ENCODE measurements at regions of chr11 and their contacts with region 1.

Region 1: DNA sequence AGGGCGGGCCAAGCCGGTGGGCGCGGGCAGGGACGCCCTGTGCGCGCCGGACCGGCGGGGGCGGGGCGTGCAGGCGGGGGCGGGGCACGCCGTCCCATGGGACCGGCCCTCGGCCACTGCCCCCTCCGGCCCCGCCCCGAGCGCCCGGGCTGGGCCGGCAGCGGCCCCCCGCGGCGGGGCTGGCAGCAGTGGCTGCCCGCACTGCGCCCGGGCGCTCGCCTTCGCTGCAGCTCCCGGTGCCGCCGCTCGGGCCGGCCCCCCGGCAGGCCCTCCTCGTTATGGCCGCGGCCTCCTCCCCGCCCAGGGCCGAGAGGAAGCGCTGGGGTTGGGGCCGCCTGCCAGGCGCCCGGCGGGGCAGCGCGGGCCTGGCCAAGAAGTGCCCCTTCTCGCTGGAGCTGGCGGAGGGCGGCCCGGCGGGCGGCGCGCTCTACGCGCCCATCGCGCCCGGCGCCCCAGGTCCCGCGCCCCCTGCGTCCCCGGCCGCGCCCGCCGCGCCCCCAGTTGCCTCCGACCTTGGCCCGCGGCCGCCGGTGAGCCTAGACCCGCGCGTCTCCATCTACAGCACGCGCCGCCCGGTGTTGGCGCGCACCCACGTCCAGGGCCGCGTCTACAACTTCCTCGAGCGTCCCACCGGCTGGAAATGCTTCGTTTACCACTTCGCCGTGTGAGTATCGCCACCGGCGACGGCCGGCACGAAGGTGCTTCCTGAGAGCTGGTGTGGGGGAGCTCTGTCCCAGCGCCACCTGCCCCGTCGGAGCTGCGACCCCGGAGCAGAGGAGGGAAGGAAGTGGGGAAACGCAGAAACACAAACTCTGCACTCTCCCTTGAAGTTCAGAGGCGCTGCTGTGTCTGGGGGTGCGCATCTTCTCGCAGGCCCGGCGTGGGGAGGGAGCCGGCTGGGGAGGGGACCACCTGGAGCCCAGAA is at the start of gene KCNQ1:
- DNase-seq: peak in 6 of 7 donors; percentile 69 to 90 (median 79)
- H3K4me3 ChIP-seq: peak within 1 kb of the TSS; percentile 34 to 88 (median 76)
- H3K27ac ChIP-seq: peak within 1 kb of the TSS; percentile 34 to 91 (median 73)
- H3K4me1 ChIP-seq: peaks cover 41 to 42% of the 10 kb centered on the region in 2 donors
- H3K27me3 ChIP-seq: no peaks in the 10 kb centered on the region
- CTCF ChIP-seq: peak in 2 of 6 experiments; percentile 27 to 29
- POLR2A ChIP-seq: peak; percentile 88 to 93
- total RNA-seq, gene KCNQ1: 11.0 to 447 (median 353) TPM

Region 2: DNA sequence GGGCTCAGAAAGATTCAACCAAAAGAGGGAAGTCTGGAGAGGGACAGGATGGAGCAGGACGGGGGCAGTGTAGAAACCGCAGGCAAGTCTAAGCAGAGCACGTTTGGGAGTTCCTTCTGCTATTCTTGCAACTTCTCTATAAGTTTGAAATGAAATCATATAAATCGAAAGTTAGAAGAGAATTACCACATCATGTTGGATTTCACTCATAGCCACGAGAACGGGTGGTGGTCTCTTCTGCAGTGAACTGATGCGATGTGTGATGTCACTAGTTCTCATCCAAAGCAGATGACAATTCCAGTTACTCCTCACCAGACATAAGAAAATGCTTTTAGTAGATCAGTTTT is 35.8 kb after region 1 on chr11:
- intact Hi-C with region 1: loop called in 1 of 2 experiments (anchors 5 kb)
- DNase-seq: peak in 4 of 7 donors; percentile 23 to 53 (median 37)
- H3K4me3 ChIP-seq: no peak overlapping the region
- H3K27ac ChIP-seq: peak overlapping the region; percentile 50 to 92 (median 75)
- H3K4me1 ChIP-seq: peaks cover 51 to 66% of the 10 kb centered on the region in 2 donors
- H3K27me3 ChIP-seq: no peaks in the 10 kb centered on the region
- CTCF ChIP-seq: no peak
- POLR2A ChIP-seq: no peak

Region 3: GRCh38 chr11:2519862-2520735 is 75.0 kb after region 1 on chr11:
- intact Hi-C with region 1: loop called (anchors 5 kb)
- DNase-seq: peak in 6 of 7 donors; percentile 10 to 51 (median 19)
- H3K4me3 ChIP-seq: no peak overlapping the region
- H3K27ac ChIP-seq: peak overlapping the region in 1 of 5 donors; percentile 34
- H3K4me1 ChIP-seq: peaks cover 28 to 35% of the 10 kb centered on the region in 2 donors
- H3K27me3 ChIP-seq: no peaks in the 10 kb centered on the region
- CTCF ChIP-seq: no peak
- POLR2A ChIP-seq: no peak